WTC11 (cell line): ENCODE measurements at regions of chr9 and their contacts with region 1.

Region 1: GRCh38 chr9:129139993-129140396 is 28.8 kb downstream of the PTPA start:
- DNase-seq: peak; percentile 70
- ATAC-seq: peak; percentile 58
- H3K4me3 Mint-ChIP-seq: peak overlapping the region; percentile 66
- H3K27ac Mint-ChIP-seq: peak overlapping the region; percentile 97
- H3K4me1 Mint-ChIP-seq: peaks cover 62% of the 10 kb centered on the region
- H3K27me3 Mint-ChIP-seq: no peaks in the 10 kb centered on the region
- CTCF ChIP-seq: no peak

Region 2: GRCh38 chr9:128643519-128644300 is 496.3 kb before region 1 on chr9:
- CTCF ChIA-PET with region 1: no interaction called
- POLR2A ChIA-PET with region 1: no interaction called
- DNase-seq: no peak
- ATAC-seq: no peak
- H3K4me3 Mint-ChIP-seq: no peak overlapping the region
- H3K27ac Mint-ChIP-seq: peak overlapping the region; percentile 78; the same call in 1 of the 2 replicates
- H3K4me1 Mint-ChIP-seq: no peaks in the 10 kb centered on the region
- H3K27me3 Mint-ChIP-seq: no peaks in the 10 kb centered on the region
- CTCF ChIP-seq: no peak

Region 3: GRCh38 chr9:129160712-129161533 is 20.9 kb after region 1 on chr9:
- CTCF ChIA-PET with region 1: interaction called, 345 read pairs
- POLR2A ChIA-PET with region 1: interaction called, 5 read pairs
- DNase-seq: no peak
- ATAC-seq: no peak
- H3K4me3 Mint-ChIP-seq: no peak overlapping the region
- H3K27ac Mint-ChIP-seq: peak overlapping the region; percentile 36; the same call in 1 of the 2 replicates
- H3K4me1 Mint-ChIP-seq: peaks cover 8% of the 10 kb centered on the region; the same call in 1 of the 2 replicates
- H3K27me3 Mint-ChIP-seq: no peaks in the 10 kb centered on the region
- CTCF ChIP-seq: no peak

Region 4: GRCh38 chr9:129482521-129483414 is 342.8 kb after region 1 on chr9:
- CTCF ChIA-PET with region 1: interaction called, 13 read pairs
- POLR2A ChIA-PET with region 1: no interaction called
- DNase-seq: no peak
- ATAC-seq: peak; percentile 3; the same call in 1 of the 2 replicates
- H3K4me3 Mint-ChIP-seq: peak overlapping the region; percentile 67
- H3K27ac Mint-ChIP-seq: no peak overlapping the region
- H3K4me1 Mint-ChIP-seq: peaks cover 37% of the 10 kb centered on the region
- H3K27me3 Mint-ChIP-seq: peaks cover 85% of the 10 kb centered on the region
- CTCF ChIP-seq: no peak

Region 5: DNA sequence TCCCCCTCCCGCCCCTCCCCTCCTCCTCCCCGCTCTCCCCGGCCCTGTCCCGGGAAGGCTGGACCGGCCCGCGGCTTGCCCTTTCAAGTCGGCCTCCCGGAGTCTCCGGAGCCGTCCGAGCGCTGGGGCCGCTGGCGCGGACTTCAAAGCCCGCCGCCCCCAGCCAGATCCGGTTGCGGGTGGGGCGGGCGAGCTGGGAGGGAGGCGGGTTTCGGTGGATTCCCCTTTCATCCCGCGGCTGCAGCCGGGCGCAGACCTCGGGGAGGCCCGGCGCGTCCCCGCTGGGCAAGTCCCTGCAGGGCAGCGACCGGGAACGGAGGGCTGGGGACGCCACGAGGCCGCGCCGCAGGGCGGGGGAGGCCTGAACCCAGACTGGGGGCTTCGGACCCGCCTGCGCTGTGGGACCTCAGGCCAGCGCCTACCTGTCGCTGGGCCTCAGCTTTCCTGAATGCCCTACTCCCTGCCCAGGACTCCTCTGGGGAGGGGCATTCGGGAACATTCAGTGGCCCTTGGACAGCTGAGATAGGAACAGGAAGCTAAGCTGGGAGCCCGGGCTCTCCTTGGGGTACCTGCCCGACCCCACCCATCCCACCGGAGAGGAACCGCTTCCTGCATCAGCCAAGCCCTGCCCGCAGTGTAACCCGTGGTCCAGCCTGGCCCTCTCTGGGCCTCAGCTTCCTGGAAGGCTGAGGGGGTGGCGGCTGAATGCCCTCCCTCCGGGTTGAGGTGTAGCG is 457.5 kb after region 1 on chr9:
- CTCF ChIA-PET with region 1: interaction called, 10 read pairs
- POLR2A ChIA-PET with region 1: no interaction called
- DNase-seq: peak; percentile 74
- ATAC-seq: peak; percentile 29
- H3K4me3 Mint-ChIP-seq: peak overlapping the region; percentile 56
- H3K27ac Mint-ChIP-seq: no peak overlapping the region
- H3K4me1 Mint-ChIP-seq: peaks cover 44% of the 10 kb centered on the region
- H3K27me3 Mint-ChIP-seq: peaks cover 52% of the 10 kb centered on the region
- CTCF ChIP-seq: no peak

Region 6: GRCh38 chr9:129619787-129620668 is 480.0 kb after region 1 on chr9:
- CTCF ChIA-PET with region 1: interaction called, 60 read pairs
- POLR2A ChIA-PET with region 1: interaction called, 4 read pairs
- DNase-seq: no peak
- ATAC-seq: peak; percentile 33
- H3K4me3 Mint-ChIP-seq: peak overlapping the region; percentile 62
- H3K27ac Mint-ChIP-seq: no peak overlapping the region
- H3K4me1 Mint-ChIP-seq: peaks cover 14% of the 10 kb centered on the region
- H3K27me3 Mint-ChIP-seq: peaks cover 50% of the 10 kb centered on the region
- CTCF ChIP-seq: no peak